Mammary epithelial cell (primary cell): ENCODE measurements at regions of chr5 and their contacts with region 1.

Region 1: GRCh38 chr5:90606539-90606938 is 47.9 kb downstream of the ADGRV1 start:
- DNase-seq: peak; percentile 4
- H3K4me3 ChIP-seq: no peak overlapping the region
- H3K27ac ChIP-seq: no peak overlapping the region
- H3K4me1 ChIP-seq: no peaks in the 10 kb centered on the region
- H3K27me3 ChIP-seq: no peaks in the 10 kb centered on the region
- CTCF ChIP-seq: peak; percentile 51 to 55

Region 2: DNA sequence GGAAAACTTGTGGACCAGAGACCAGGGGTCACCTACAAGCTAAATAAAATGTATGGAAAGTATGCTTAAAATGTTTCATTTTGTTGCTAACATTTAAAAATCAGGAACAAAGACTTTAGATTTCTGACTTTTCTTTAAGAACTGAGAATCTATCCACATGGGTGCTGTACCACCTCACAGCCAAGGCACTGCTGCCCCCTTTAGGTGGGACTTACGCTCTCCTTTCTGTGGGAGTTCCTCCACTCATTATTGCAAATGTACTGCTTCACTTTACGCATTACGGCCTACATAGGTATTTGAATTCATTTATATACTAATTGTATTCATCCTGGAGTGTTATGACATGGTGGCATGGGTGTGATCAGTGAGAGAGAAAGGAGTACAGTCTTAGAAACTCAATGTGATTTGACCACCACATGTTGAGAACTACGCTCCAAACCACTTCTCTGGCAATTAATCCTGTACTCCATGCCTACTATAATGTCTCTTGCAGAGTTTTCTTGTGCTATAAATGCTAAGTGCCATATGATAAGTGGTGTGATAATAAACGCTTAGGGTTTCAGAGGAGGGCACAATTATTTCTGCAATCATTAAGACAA is 172.3 kb before region 1 on chr5:
- CTCF ChIA-PET with region 1: no interaction called
- dilution Hi-C with region 1: no loop called
- in situ Hi-C with region 1: loop called in 1 of 2 experiments (anchors 25 kb)
- intact Hi-C with region 1: loop called (anchors 1 kb)
- DNase-seq: peak; percentile 3
- H3K4me3 ChIP-seq: no peak overlapping the region
- H3K27ac ChIP-seq: no peak overlapping the region
- H3K4me1 ChIP-seq: no peaks in the 10 kb centered on the region
- H3K27me3 ChIP-seq: no peaks in the 10 kb centered on the region
- CTCF ChIP-seq: peak; percentile 51 to 55

Region 3: DNA sequence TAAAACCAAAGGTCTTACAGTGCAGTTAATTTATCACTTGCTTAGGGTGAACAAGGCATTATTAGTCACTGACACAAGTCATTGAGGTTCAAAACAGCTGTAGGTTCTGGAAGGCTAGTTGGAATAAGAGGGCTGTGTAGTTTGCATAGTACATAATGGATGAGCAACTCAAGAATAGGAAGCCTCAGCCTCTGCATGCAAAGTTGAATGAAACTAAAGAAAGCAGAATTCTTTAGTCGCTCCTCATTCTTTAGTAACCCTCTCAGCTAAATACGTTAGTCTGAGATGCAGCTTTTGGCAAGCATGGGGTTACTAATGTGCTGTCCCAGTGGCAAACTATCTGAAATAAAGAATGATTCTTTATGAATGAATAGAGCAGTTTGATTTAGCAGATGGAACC is 26.3 kb after region 1 on chr5:
- CTCF ChIA-PET with region 1: no interaction called
- dilution Hi-C with region 1: no loop called
- in situ Hi-C with region 1: no loop called
- intact Hi-C with region 1: no loop called
- DNase-seq: no peak
- H3K4me3 ChIP-seq: no peak overlapping the region
- H3K27ac ChIP-seq: no peak overlapping the region
- H3K4me1 ChIP-seq: no peaks in the 10 kb centered on the region
- H3K27me3 ChIP-seq: no peaks in the 10 kb centered on the region
- CTCF ChIP-seq: no peak

Region 4: DNA sequence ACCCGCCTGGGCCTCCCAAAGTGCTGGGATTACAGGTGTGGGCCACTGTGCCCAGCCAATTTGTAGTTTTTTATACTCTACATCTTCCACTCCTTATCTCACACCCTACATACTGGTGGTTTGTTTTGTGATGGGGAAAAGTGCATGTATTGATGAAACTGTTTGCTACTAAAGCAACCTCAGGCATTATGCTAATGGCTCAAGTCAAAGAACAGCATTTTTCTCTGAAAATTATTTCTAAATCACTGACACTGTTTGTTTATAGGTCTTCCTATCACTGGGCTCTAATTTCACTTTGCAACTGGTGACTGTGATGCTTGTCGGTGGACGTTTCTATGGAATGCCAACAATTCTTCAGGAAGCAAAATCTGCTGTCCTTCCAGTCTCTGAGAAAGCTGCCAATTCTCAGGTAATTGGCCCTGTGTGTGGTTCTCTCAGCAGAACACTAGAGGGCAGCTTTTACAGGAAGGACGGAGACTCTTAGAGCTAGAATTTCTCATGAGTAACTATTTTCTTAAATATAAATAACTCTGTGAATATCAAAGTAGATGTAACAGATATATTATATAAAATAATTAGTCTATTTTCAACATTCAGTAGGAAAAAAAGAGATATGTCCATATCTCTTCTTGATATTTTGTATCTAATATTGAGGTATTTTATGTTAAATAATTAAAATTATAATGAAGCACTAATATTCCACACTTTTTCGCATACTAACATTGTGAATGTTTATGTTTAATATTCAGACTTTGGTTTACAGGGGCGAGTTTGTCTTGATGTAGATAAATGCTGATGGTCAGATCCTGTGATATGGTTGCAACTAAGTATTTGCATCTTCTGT is 196.2 kb after region 1 on chr5:
- CTCF ChIA-PET with region 1: no interaction called
- dilution Hi-C with region 1: no loop called
- in situ Hi-C with region 1: no loop called
- intact Hi-C with region 1: no loop called
- DNase-seq: peak; percentile 30
- H3K4me3 ChIP-seq: no peak overlapping the region
- H3K27ac ChIP-seq: no peak overlapping the region
- H3K4me1 ChIP-seq: no peaks in the 10 kb centered on the region
- H3K27me3 ChIP-seq: no peaks in the 10 kb centered on the region
- CTCF ChIP-seq: peak; percentile 80

Region 5: GRCh38 chr5:90866333-90866732 is 259.8 kb after region 1 on chr5:
- CTCF ChIA-PET with region 1: no interaction called
- dilution Hi-C with region 1: no loop called
- in situ Hi-C with region 1: no loop called
- intact Hi-C with region 1: no loop called
- DNase-seq: no peak
- H3K4me3 ChIP-seq: no peak overlapping the region
- H3K27ac ChIP-seq: no peak overlapping the region
- H3K4me1 ChIP-seq: no peaks in the 10 kb centered on the region
- H3K27me3 ChIP-seq: no peaks in the 10 kb centered on the region
- CTCF ChIP-seq: peak; percentile 41 to 48